Activated naive CD8-positive, alpha-beta T cell treated with anti-CD3 and anti-CD28 coated beads, Interleukin-2, amount 10 ng/mL, durations not matched to agents 7 days and 5 days (primary cell): ENCODE measurements at regions of chr2 and their contacts with region 1.

Region 1: GRCh38 chr2:96868555-96869280 is 1.2 kb downstream of the SEMA4C start:
- DNase-seq: peak; percentile 77
- ATAC-seq: peak; percentile 58
- H3K4me3 Mint-ChIP-seq: peak overlapping the region; percentile 85
- H3K27ac Mint-ChIP-seq: peak overlapping the region; percentile 81
- H3K4me1 Mint-ChIP-seq: peaks cover 29% of the 10 kb centered on the region
- H3K27me3 Mint-ChIP-seq: peaks cover 1% of the 10 kb centered on the region

Region 2: GRCh38 chr2:96715658-96716057 is 153.1 kb before region 1 on chr2:
- POLR2A ChIA-PET with region 1: no interaction called
- DNase-seq: no peak
- ATAC-seq: no peak
- H3K4me3 Mint-ChIP-seq: no peak overlapping the region
- H3K27ac Mint-ChIP-seq: no peak overlapping the region
- H3K4me1 Mint-ChIP-seq: no peaks in the 10 kb centered on the region
- H3K27me3 Mint-ChIP-seq: no peaks in the 10 kb centered on the region

Region 3: GRCh38 chr2:96913398-96914202 is 44.9 kb after region 1 on chr2:
- POLR2A ChIA-PET with region 1: interaction called, 13 read pairs
- DNase-seq: peak; percentile 67
- ATAC-seq: peak; percentile 86
- H3K4me3 Mint-ChIP-seq: peak overlapping the region; percentile 84
- H3K27ac Mint-ChIP-seq: peak overlapping the region; percentile 96
- H3K4me1 Mint-ChIP-seq: peaks cover 26% of the 10 kb centered on the region
- H3K27me3 Mint-ChIP-seq: peaks cover 4% of the 10 kb centered on the region

Region 4: DNA sequence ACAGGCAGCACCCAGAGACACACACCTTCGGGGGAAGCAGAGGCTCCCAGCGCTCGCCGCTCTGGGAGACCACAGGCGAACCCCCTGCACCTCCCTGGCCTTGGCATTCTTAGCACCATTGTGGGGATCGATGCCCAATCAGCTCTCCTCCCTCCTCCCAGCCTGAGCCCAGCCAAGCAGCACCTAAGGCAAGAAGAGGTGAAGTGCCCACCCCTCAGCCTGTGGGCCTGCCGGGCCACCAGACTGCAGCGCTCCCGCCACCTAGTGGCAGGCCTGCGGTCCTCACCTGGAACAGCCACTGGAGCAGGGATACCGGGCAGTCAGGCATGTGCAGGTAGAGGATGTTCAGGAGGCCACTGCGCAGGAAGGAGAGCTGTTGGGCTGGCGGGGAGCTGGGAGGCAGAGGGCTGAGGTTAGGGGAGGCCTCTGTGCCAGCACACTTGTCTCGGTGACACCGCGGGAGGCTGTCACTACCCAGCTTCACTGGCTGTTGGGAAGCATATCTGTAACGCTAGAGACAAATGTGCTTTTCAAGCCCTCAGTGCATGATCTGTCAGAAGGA is 82.5 kb after region 1 on chr2:
- POLR2A ChIA-PET with region 1: interaction called, 20 read pairs
- DNase-seq: peak; percentile 86
- ATAC-seq: peak; percentile 89
- H3K4me3 Mint-ChIP-seq: no peak overlapping the region
- H3K27ac Mint-ChIP-seq: peak overlapping the region; percentile 48
- H3K4me1 Mint-ChIP-seq: peaks cover 28% of the 10 kb centered on the region
- H3K27me3 Mint-ChIP-seq: peaks cover 5% of the 10 kb centered on the region

Region 5: DNA sequence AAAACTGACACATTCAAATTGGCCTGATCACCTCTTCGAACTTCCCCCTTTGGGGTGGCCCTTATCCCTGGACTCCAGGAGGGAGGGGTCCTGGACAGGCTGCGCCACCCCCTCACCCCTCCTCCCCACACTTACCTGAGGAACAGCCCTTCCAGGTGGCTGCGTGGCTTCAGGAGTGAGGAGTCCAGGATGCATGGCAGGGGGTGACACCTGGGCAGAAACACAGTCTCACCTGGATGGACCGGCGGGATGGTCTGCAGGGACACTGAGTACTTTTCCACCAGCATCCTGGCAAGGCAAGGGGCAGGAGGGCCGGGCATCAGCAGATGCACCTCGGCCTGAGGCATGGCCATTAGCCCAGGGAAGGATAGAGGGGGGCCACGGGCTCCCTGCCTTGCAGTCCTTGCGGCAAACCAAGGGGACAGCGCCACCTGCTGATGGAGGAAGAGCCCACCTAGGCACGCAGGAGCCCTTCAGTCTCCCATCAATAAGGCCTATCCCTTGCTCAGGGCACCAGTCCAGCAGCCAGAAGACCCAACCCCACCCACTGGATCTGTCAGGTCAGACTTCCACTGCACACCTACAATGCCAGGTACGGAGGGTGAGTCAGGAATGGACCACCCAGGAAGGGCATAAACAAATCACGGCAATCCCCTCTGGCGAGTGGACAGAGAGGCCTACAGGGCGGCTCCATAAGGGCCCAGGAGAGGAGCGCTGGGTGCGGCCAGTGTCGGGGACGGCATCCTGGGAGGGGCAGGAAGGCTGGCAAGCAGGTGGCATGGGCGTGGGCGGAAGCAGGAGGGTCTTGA is 91.6 kb after region 1 on chr2:
- POLR2A ChIA-PET with region 1: interaction called, 10 read pairs
- DNase-seq: peak; percentile 92
- ATAC-seq: peak; percentile 48
- H3K4me3 Mint-ChIP-seq: peak overlapping the region; percentile 79
- H3K27ac Mint-ChIP-seq: peak overlapping the region; percentile 98
- H3K4me1 Mint-ChIP-seq: peaks cover 57% of the 10 kb centered on the region
- H3K27me3 Mint-ChIP-seq: no peaks in the 10 kb centered on the region